CD4-positive, alpha-beta T cell (primary cell): ENCODE measurements at regions of chr6 and their contacts with region 1.

Region 1: GRCh38 chr6:89080542-89081422 is at the start of gene PNRC1:
- DNase-seq: peak; percentile 100
- ATAC-seq: peak; percentile 72
- H3K4me3 ChIP-seq: peak within 1 kb of the TSS; percentile 96
- H3K4me3 Mint-ChIP-seq: peak within 1 kb of the TSS; percentile 95
- H3K27ac ChIP-seq: peak within 1 kb of the TSS; percentile 99 to 100
- H3K27ac Mint-ChIP-seq: peak within 1 kb of the TSS; percentile 97
- H3K4me1 ChIP-seq: peaks cover 31% of the 10 kb centered on the region
- H3K4me1 Mint-ChIP-seq: peaks cover 46% of the 10 kb centered on the region
- H3K27me3 ChIP-seq: no peaks in the 10 kb centered on the region
- H3K27me3 Mint-ChIP-seq: peaks cover 5% of the 10 kb centered on the region
- CTCF ChIP-seq: no peak
- total RNA-seq, gene PNRC1: 974 to 1,023 TPM

Region 2: GRCh38 chr6:87154993-87155841 is 1925.6 kb before region 1 on chr6 and contains the start of gene ZNF292:
- CTCF ChIA-PET with region 1: no interaction called
- POLR2A ChIA-PET with region 1: interaction called, 5 read pairs
- intact Hi-C with region 1: loop called in 1 of 2 experiments (anchors 10 kb)
- DNase-seq: peak; percentile 87 to 98 (median 92)
- ATAC-seq: peak; percentile 71
- H3K4me3 ChIP-seq: peak within 1 kb of the TSS; percentile 86
- H3K4me3 Mint-ChIP-seq: peak within 1 kb of the TSS; percentile 92
- H3K27ac ChIP-seq: peak within 1 kb of the TSS; percentile 95 to 96
- H3K27ac Mint-ChIP-seq: peak within 1 kb of the TSS; percentile 88
- H3K4me1 ChIP-seq: peaks cover 50% of the 10 kb centered on the region
- H3K4me1 Mint-ChIP-seq: peaks cover 62% of the 10 kb centered on the region
- H3K27me3 ChIP-seq: no peaks in the 10 kb centered on the region
- H3K27me3 Mint-ChIP-seq: no peaks in the 10 kb centered on the region
- CTCF ChIP-seq: no peak
- total RNA-seq, gene ZNF292: 81.5 to 82.5 TPM

Region 3: DNA sequence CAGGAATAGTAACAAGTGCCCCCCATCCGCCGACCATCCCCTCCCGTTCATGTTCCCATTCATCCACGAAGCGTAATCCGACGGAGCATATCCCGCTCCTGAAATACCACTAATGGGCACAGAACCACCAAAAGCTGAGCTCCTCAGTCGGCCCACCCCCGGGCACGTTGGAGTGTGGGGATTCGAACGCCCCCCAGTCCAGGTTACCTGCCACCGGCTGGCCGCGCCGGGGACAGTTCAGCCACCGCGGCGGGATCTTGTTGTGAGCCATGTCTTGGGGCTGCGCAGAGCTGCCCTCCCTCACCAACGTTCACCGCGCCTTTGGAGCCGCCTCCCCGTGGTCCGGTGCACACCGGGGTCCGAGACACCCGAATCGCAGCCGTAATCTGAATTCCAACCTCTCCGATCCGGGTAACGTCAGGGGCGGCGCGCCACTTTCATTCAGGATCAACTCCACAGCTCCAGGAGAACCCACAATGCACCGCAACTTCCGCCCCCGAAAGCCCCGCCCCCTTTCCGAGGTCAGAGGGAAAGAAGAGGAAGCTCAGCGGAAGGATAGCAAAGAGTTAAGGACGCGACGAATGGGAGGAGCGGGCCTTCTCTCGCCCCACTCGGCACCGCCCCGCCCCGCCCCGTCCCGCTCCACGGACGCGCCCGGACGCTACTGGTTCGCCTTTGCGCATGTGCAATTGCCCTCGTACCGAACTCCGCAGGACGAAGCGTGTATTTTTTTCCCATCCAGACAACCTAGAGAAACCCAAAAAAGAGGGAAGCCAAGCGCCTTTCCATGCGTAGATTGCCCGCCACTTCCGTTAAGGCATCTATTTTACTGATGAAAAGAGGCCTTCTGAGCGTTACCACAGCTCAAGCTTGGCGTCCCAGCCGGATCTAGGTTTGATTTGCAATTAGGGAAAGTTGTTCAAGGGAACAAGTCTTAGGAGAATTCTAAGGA is 117.4 kb before region 1 on chr6 and contains the start of gene RNGTT:
- CTCF ChIA-PET with region 1: interaction called, 8 read pairs
- POLR2A ChIA-PET with region 1: interaction called, 103 read pairs
- intact Hi-C with region 1: loop called (anchors 5 kb)
- DNase-seq: peak; percentile 94 to 99 (median 97)
- ATAC-seq: peak; percentile 98
- H3K4me3 ChIP-seq: peak within 1 kb of the TSS; percentile 88
- H3K4me3 Mint-ChIP-seq: peak within 1 kb of the TSS; percentile 96
- H3K27ac ChIP-seq: peak within 1 kb of the TSS; percentile 60 to 65
- H3K27ac Mint-ChIP-seq: peak within 1 kb of the TSS; percentile 82
- H3K4me1 ChIP-seq: peaks cover 15% of the 10 kb centered on the region
- H3K4me1 Mint-ChIP-seq: peaks cover 63% of the 10 kb centered on the region
- H3K27me3 ChIP-seq: no peaks in the 10 kb centered on the region
- H3K27me3 Mint-ChIP-seq: no peaks in the 10 kb centered on the region
- CTCF ChIP-seq: no peak
- total RNA-seq, gene RNGTT: 11.6 to 12.4 TPM

Region 4: DNA sequence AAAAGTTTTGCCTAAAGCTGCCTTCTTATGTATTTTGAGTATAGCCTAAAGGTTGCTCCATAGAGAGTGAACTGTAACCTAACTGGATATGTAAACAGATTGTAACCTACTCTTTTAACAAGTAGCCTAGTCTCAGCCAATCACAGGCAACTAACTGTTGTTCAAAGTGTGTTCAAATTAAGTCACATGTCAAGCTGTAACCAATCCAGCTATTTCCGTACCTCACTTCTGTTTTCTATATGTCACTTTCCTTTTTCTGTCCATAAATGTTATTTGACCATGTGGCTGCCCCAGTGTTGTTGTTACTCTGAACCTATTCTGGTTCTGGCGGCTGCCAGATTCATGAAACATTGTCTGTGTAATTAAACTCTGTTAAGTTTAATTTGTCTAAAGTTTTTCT is 70.0 kb before region 1 on chr6:
- CTCF ChIA-PET with region 1: no interaction called
- POLR2A ChIA-PET with region 1: interaction called, 11 read pairs
- intact Hi-C with region 1: no loop called
- DNase-seq: no peak
- ATAC-seq: no peak
- H3K4me3 ChIP-seq: no peak overlapping the region
- H3K4me3 Mint-ChIP-seq: no peak overlapping the region
- H3K27ac ChIP-seq: no peak overlapping the region
- H3K27ac Mint-ChIP-seq: no peak overlapping the region
- H3K4me1 ChIP-seq: peaks cover 7% of the 10 kb centered on the region
- H3K4me1 Mint-ChIP-seq: peaks cover 10% of the 10 kb centered on the region
- H3K27me3 ChIP-seq: no peaks in the 10 kb centered on the region
- H3K27me3 Mint-ChIP-seq: no peaks in the 10 kb centered on the region
- CTCF ChIP-seq: no peak

Region 5: GRCh38 chr6:89145787-89146646 is 65.2 kb after region 1 on chr6 and contains the start of gene PM20D2:
- CTCF ChIA-PET with region 1: interaction called, 6 read pairs
- POLR2A ChIA-PET with region 1: interaction called, 212 read pairs
- intact Hi-C with region 1: loop called (anchors 2 kb)
- DNase-seq: peak; percentile 33 to 78 (median 54)
- ATAC-seq: peak; percentile 73
- H3K4me3 ChIP-seq: peak within 1 kb of the TSS; percentile 74
- H3K4me3 Mint-ChIP-seq: peak within 1 kb of the TSS; percentile 99
- H3K27ac ChIP-seq: peak within 1 kb of the TSS; percentile 45 to 62
- H3K27ac Mint-ChIP-seq: peak within 1 kb of the TSS; percentile 93
- H3K4me1 ChIP-seq: peaks cover 12% of the 10 kb centered on the region
- H3K4me1 Mint-ChIP-seq: peaks cover 37% of the 10 kb centered on the region
- H3K27me3 ChIP-seq: no peaks in the 10 kb centered on the region
- H3K27me3 Mint-ChIP-seq: no peaks in the 10 kb centered on the region
- CTCF ChIP-seq: no peak
- total RNA-seq, gene PM20D2: 5.2 to 5.3 TPM

Region 6: GRCh38 chr6:89197141-89197540 is 116.4 kb after region 1 on chr6:
- CTCF ChIA-PET with region 1: no interaction called
- POLR2A ChIA-PET with region 1: no interaction called
- intact Hi-C with region 1: no loop called
- DNase-seq: no peak
- ATAC-seq: no peak
- H3K4me3 ChIP-seq: no peak overlapping the region
- H3K4me3 Mint-ChIP-seq: no peak overlapping the region
- H3K27ac ChIP-seq: no peak overlapping the region
- H3K27ac Mint-ChIP-seq: no peak overlapping the region
- H3K4me1 ChIP-seq: no peaks in the 10 kb centered on the region
- H3K4me1 Mint-ChIP-seq: no peaks in the 10 kb centered on the region
- H3K27me3 ChIP-seq: no peaks in the 10 kb centered on the region
- H3K27me3 Mint-ChIP-seq: peaks cover 5% of the 10 kb centered on the region
- CTCF ChIP-seq: no peak

Region 7: GRCh38 chr6:89371849-89372505 is 291.2 kb after region 1 on chr6:
- CTCF ChIA-PET with region 1: no interaction called
- POLR2A ChIA-PET with region 1: interaction called, 13 read pairs
- intact Hi-C with region 1: no loop called
- DNase-seq: peak; percentile 64 to 89 (median 76)
- ATAC-seq: peak; percentile 65
- H3K4me3 ChIP-seq: no peak overlapping the region
- H3K4me3 Mint-ChIP-seq: no peak overlapping the region
- H3K27ac ChIP-seq: peak overlapping the region in 1 of 2 donors; percentile 32
- H3K27ac Mint-ChIP-seq: peak overlapping the region; percentile 79
- H3K4me1 ChIP-seq: peaks cover 17% of the 10 kb centered on the region
- H3K4me1 Mint-ChIP-seq: peaks cover 27% of the 10 kb centered on the region
- H3K27me3 ChIP-seq: no peaks in the 10 kb centered on the region
- H3K27me3 Mint-ChIP-seq: no peaks in the 10 kb centered on the region
- CTCF ChIP-seq: peak; percentile 97

Region 8: GRCh38 chr6:89819336-89820130 is 738.8 kb after region 1 on chr6 and contains the start of gene MDN1:
- CTCF ChIA-PET with region 1: no interaction called
- POLR2A ChIA-PET with region 1: interaction called, 11 read pairs
- intact Hi-C with region 1: loop called in 1 of 2 experiments (anchors 10 kb)
- DNase-seq: peak; percentile 67 to 96 (median 82)
- ATAC-seq: peak; percentile 91
- H3K4me3 ChIP-seq: peak within 1 kb of the TSS; percentile 91
- H3K4me3 Mint-ChIP-seq: peak within 1 kb of the TSS; percentile 93
- H3K27ac ChIP-seq: peak within 1 kb of the TSS; percentile 79 to 83
- H3K27ac Mint-ChIP-seq: peak within 1 kb of the TSS; percentile 86
- H3K4me1 ChIP-seq: peaks cover 24% of the 10 kb centered on the region
- H3K4me1 Mint-ChIP-seq: peaks cover 36% of the 10 kb centered on the region
- H3K27me3 ChIP-seq: no peaks in the 10 kb centered on the region
- H3K27me3 Mint-ChIP-seq: no peaks in the 10 kb centered on the region
- CTCF ChIP-seq: no peak
- total RNA-seq, gene MDN1: 40.3 to 40.4 TPM